H1 (cell line): ENCODE measurements at regions of chr10 and their contacts with region 1.

Region 1: GRCh38 chr10:84026544-84027257 is 112.6 kb upstream of the GHITM start:
- DNase-seq: peak in 1 of 2 experiments; percentile 68
- H3K4me3 ChIP-seq: no peak overlapping the region
- H3K27ac ChIP-seq: no peak overlapping the region
- H3K4me1 ChIP-seq: no peaks in the 10 kb centered on the region
- H3K27me3 ChIP-seq: no peaks in the 10 kb centered on the region; a peak in 1 of 7 replicates
- CTCF ChIP-seq: peak in 2 of 3 experiments; percentile 68 to 75; a peak in 3 of 4 replicates
- EP300 ChIP-seq: no peak
- POLR2A ChIP-seq: no peak
- RAD21 ChIP-seq: peak; percentile 71 to 80

Region 2: GRCh38 chr10:84015877-84016595 is 10.7 kb before region 1 on chr10:
- CTCF ChIA-PET with region 1: interaction called, 18 read pairs
- POLR2A ChIA-PET with region 1: no interaction called
- DNase-seq: no peak
- H3K4me3 ChIP-seq: no peak overlapping the region
- H3K27ac ChIP-seq: no peak overlapping the region
- H3K4me1 ChIP-seq: peaks cover 0 to 4% (median 0%) of the 10 kb centered on the region in 4 experiments; a peak in 1 of 7 replicates
- H3K27me3 ChIP-seq: no peaks in the 10 kb centered on the region
- CTCF ChIP-seq: no peak
- EP300 ChIP-seq: no peak
- POLR2A ChIP-seq: no peak
- RAD21 ChIP-seq: no peak

Region 3: GRCh38 chr10:84038035-84038434 is 11.3 kb after region 1 on chr10:
- CTCF ChIA-PET with region 1: interaction called, 10 read pairs
- POLR2A ChIA-PET with region 1: no interaction called
- DNase-seq: no peak
- H3K4me3 ChIP-seq: no peak overlapping the region
- H3K27ac ChIP-seq: no peak overlapping the region
- H3K4me1 ChIP-seq: no peaks in the 10 kb centered on the region
- H3K27me3 ChIP-seq: no peaks in the 10 kb centered on the region
- CTCF ChIP-seq: no peak
- EP300 ChIP-seq: no peak
- POLR2A ChIP-seq: no peak
- RAD21 ChIP-seq: no peak

Region 4: DNA sequence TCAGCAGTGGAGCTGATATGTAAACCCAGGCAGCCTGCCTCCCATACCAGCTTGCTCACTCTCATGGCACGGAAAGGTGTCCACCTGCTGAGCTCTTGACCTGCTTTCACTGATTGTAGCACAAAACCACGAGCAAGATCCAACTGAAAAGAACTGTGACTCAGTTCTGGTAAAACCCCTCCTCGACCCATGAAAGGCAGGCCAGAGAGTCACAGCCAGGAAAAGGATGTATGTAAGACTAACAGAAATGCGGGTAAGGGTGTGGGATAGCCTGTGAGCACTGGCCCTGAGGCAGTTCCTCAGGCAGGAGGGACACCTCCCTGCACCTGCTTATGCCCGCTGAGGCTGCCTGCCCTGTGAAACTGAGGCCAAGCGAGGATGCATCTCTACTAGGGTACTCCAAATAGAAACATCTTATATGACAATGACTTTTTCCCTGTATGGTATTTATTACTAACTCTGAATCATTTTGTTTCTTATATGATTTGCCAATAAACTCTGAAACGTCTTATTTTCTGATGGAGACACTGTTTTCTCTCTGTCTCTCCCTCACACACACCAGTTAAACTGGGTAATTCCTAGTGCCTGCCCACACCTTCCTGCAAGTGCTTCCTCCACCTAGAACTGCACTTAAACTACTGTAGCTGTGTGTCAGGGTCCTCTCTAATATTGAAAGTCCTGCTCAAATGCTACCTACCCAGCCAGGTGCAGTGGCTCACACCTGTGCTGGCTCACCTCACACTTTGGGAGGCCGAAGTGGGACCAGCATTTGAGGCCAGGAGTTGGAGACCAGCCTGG is 39.3 kb after region 1 on chr10:
- CTCF ChIA-PET with region 1: no interaction called
- POLR2A ChIA-PET with region 1: no interaction called
- DNase-seq: no peak
- H3K4me3 ChIP-seq: no peak overlapping the region
- H3K27ac ChIP-seq: no peak overlapping the region
- H3K4me1 ChIP-seq: no peaks in the 10 kb centered on the region
- H3K27me3 ChIP-seq: no peaks in the 10 kb centered on the region
- CTCF ChIP-seq: no peak
- EP300 ChIP-seq: no peak
- POLR2A ChIP-seq: no peak
- RAD21 ChIP-seq: no peak

Region 5: GRCh38 chr10:84114088-84114667 is 87.5 kb after region 1 on chr10:
- CTCF ChIA-PET with region 1: interaction called, 13 read pairs
- POLR2A ChIA-PET with region 1: no interaction called
- DNase-seq: peak in 1 of 2 experiments; percentile 50
- H3K4me3 ChIP-seq: no peak overlapping the region
- H3K27ac ChIP-seq: no peak overlapping the region
- H3K4me1 ChIP-seq: no peaks in the 10 kb centered on the region
- H3K27me3 ChIP-seq: no peaks in the 10 kb centered on the region
- CTCF ChIP-seq: peak in 2 of 3 experiments; percentile 43 to 49; a peak in 3 of 4 replicates
- EP300 ChIP-seq: no peak
- POLR2A ChIP-seq: no peak
- RAD21 ChIP-seq: peak; percentile 33 to 47